ENCODE measurements at regions of chr17 and their contacts with region 1.

Region 1: GRCh38 chr17:75271233-75271954 is 363 bp upstream of the MIF4GD start:
- DNase-seq: peak; percentile 89
- H3K4me3 Mint-ChIP-seq: peak overlapping the region; percentile 79
- H3K27ac Mint-ChIP-seq: peak overlapping the region; percentile 71
- H3K4me1 Mint-ChIP-seq: peaks cover 42% of the 10 kb centered on the region
- H3K27me3 Mint-ChIP-seq: no peaks in the 10 kb centered on the region

Region 2: GRCh38 chr17:75199886-75200618 is 71.3 kb before region 1 on chr17:
- CTCF ChIA-PET with region 1: no interaction called
- DNase-seq: no peak
- H3K4me3 Mint-ChIP-seq: no peak overlapping the region
- H3K27ac Mint-ChIP-seq: no peak overlapping the region
- H3K4me1 Mint-ChIP-seq: peaks cover 12% of the 10 kb centered on the region
- H3K27me3 Mint-ChIP-seq: peaks cover 10% of the 10 kb centered on the region

Region 3: GRCh38 chr17:75250009-75250471 is 21.4 kb before region 1 on chr17:
- CTCF ChIA-PET with region 1: interaction called, 11 read pairs
- DNase-seq: peak; percentile 78
- H3K4me3 Mint-ChIP-seq: peak overlapping the region; percentile 64
- H3K27ac Mint-ChIP-seq: peak overlapping the region; percentile 90
- H3K4me1 Mint-ChIP-seq: peaks cover 40% of the 10 kb centered on the region
- H3K27me3 Mint-ChIP-seq: no peaks in the 10 kb centered on the region

Region 4: GRCh38 chr17:75289115-75289831 is 17.9 kb after region 1 on chr17 and contains the start of gene SLC25A19:
- CTCF ChIA-PET with region 1: interaction called, 22 read pairs
- DNase-seq: peak; percentile 99
- H3K4me3 Mint-ChIP-seq: peak within 1 kb of the TSS; percentile 99
- H3K27ac Mint-ChIP-seq: peak within 1 kb of the TSS; percentile 100
- H3K4me1 Mint-ChIP-seq: peaks cover 25% of the 10 kb centered on the region
- H3K27me3 Mint-ChIP-seq: peaks cover 5% of the 10 kb centered on the region

Region 5: GRCh38 chr17:75405365-75406221 is 134.2 kb after region 1 on chr17 and contains the start of gene GRB2:
- CTCF ChIA-PET with region 1: interaction called, 15 read pairs
- DNase-seq: peak; percentile 100
- H3K4me3 Mint-ChIP-seq: peak within 1 kb of the TSS; percentile 92
- H3K27ac Mint-ChIP-seq: peak within 1 kb of the TSS; percentile 96
- H3K4me1 Mint-ChIP-seq: peaks cover 45% of the 10 kb centered on the region
- H3K27me3 Mint-ChIP-seq: no peaks in the 10 kb centered on the region

Region 6: GRCh38 chr17:75412455-75413317 is 141.3 kb after region 1 on chr17:
- CTCF ChIA-PET with region 1: interaction called, 18 read pairs
- DNase-seq: peak; percentile 79
- H3K4me3 Mint-ChIP-seq: peak overlapping the region; percentile 13
- H3K27ac Mint-ChIP-seq: peak overlapping the region; percentile 64
- H3K4me1 Mint-ChIP-seq: peaks cover 29% of the 10 kb centered on the region
- H3K27me3 Mint-ChIP-seq: peaks cover 45% of the 10 kb centered on the region

Measured in activated naive CD4-positive, alpha-beta T cell treated with anti-CD3 and anti-CD28 coated beads, Interleukin-2, amount 10 ng/mL, durations not matched to agents 7 days and 5 days (primary cell).